Activated T-helper 2 cell treated with anti-CD3 and anti-CD28 coated beads, Interferon-gamma antibody, Interleukin-2, Interleukin-4, amounts not matched to agents 10 μg/mL and 5 μg/mL and 100 μg/mL, durations not matched to agents 14 hours and 24 hours and 36 hours (primary cell): ENCODE measurements at regions of chr16 and their contacts with region 1.

Region 1: DNA sequence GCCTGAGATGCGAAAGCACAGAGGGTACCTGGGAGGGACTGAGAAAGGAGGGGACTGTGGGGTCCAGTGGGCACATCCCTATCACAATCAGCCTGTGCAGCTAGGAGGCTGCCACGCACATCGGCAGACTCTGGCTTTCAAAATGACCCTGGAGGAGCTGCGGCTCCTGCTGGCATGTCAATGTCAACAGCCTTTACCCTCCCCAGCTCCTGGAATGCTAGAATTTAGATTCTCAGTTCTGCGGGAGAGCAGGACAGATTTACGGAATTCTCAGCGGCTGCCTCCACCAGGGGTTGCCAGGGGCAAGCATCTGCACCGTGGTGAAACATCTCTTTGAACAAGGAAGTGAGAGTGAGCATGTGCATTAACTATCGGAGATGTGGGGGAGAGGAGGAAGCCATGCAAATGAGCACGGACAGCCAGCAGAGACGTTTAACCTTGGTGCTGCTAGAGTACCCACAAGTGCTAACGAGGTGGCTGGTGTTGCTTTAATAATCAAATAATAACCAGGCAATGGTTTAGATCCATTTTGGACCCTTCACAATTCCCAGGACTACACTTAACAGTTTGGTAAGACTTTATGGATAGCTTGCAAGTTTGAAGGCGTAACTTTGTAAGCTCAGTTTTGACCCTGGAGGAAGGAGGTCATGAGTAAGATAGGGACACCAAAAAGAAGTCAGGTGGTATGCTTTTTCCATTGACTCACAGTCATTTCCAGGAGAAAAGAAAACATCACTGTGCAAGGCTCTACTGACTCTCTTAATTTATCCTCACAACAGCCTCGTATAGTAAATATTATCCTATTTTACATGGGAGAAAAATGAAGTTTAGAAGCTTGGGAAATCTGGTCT is 54.1 kb downstream of the XYLT1 start:
- DNase-seq: peak; percentile 49
- H3K4me3 Mint-ChIP-seq: peak overlapping the region; percentile 66
- H3K27ac Mint-ChIP-seq: peak overlapping the region; percentile 97
- H3K4me1 Mint-ChIP-seq: peaks cover 41% of the 10 kb centered on the region
- H3K27me3 Mint-ChIP-seq: no peaks in the 10 kb centered on the region

Region 2: DNA sequence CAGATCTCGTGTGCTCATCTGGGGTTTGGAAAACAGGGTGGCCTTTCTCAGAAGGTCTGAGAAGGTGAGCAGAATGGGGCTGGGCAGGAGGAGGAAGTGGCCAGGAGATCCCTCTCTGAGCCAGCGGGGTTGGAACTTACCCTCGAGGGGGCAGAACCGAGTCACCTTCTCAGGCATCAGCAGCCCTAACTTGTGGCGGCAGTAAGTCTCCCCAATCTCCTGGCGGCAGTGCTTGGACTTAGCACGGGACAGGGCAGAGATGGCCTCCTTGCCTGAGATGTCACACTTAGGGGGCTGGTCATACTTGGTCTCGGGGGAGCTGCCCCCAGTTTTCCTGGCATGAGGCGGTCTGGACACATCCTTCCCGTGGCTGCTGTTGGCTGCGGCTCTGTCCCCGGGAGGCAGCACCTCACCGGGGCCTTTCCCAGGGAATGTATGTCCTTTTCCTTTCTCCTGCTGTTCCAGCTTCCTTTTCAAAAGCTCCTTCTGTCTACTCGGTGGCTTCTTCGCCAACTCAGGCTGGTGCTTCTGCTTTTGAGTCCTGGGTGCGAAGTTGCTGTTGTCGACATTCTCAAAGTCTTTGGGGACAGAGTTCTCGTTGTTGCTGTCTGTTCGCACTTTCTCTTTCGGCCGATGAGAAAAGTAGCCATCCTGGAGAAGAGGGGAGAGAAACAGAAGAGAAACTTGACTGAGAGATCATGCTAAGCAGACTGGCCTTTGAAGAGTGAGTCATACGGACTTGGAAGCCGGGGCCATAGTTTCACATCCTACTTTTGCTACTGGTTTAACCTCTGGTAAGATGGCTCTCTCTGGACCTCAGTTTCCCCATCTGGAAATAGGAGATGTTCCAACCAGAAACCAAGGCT is 157.6 kb before region 1 on chr16:
- intact Hi-C with region 1: no loop called
- DNase-seq: no peak
- H3K4me3 Mint-ChIP-seq: no peak overlapping the region
- H3K27ac Mint-ChIP-seq: no peak overlapping the region
- H3K4me1 Mint-ChIP-seq: peaks cover 26% of the 10 kb centered on the region
- H3K27me3 Mint-ChIP-seq: no peaks in the 10 kb centered on the region

Region 3: GRCh38 chr16:17273142-17273561 is 143.5 kb before region 1 on chr16:
- intact Hi-C with region 1: loop called (anchors 2 kb)
- DNase-seq: peak; percentile 31
- H3K4me3 Mint-ChIP-seq: no peak overlapping the region
- H3K27ac Mint-ChIP-seq: no peak overlapping the region
- H3K4me1 Mint-ChIP-seq: peaks cover 58% of the 10 kb centered on the region
- H3K27me3 Mint-ChIP-seq: peaks cover 7% of the 10 kb centered on the region

Region 4: DNA sequence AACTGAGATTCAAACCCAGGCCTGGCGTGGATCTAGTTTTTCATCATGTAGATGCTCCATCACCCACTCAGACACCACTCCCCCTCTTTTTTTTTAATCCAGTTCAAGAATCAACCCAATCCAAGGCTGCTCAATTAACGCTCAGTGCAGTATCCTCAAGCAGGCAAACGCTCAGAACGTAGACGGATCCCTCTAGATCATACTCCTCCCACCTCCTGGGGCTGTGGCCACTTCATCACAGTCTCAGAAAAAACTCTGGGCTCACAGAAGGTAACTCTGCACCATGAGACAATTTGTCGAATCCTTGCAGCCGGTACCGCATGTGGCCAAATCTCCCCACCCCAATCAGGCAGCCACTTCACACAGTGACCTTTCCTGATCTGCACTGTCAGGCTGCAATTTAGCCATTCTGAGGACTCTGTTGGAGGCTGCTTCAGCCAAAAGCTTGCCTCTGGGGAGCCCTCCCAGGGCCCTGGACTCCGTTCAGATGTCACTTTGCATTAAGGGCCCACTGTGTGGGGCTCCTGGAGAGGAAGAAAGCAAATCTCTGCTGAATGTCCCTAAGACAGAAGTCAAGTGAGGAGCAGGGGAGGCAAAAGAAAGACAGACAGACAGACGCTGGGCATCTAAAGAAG is 129.4 kb before region 1 on chr16:
- intact Hi-C with region 1: no loop called
- DNase-seq: no peak
- H3K4me3 Mint-ChIP-seq: no peak overlapping the region
- H3K27ac Mint-ChIP-seq: no peak overlapping the region
- H3K4me1 Mint-ChIP-seq: peaks cover 11% of the 10 kb centered on the region
- H3K27me3 Mint-ChIP-seq: no peaks in the 10 kb centered on the region

Region 5: GRCh38 chr16:17369421-17370222 is 47.1 kb before region 1 on chr16:
- intact Hi-C with region 1: loop called (anchors 1 kb)
- DNase-seq: peak; percentile 76
- H3K4me3 Mint-ChIP-seq: peak overlapping the region; percentile 83
- H3K27ac Mint-ChIP-seq: peak overlapping the region; percentile 99
- H3K4me1 Mint-ChIP-seq: peaks cover 83% of the 10 kb centered on the region
- H3K27me3 Mint-ChIP-seq: no peaks in the 10 kb centered on the region

Region 6: DNA sequence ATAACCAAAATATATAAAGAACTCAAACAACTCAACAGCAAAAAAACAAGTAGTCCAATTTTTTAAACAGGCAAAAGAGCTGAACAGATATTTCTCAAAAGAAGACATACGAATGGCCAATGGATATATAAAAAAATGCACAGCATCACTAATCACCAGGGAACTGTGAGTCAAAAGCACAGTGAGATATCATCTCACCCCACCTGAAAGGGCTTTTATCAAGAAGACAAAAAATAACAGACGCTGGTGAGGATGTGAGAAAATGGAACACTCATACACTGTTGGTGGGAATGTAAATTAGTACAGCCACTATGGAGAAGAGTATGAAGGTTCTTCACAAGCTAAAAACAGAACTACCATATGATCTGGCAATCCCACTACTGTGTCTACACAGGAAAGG is 46.6 kb after region 1 on chr16:
- intact Hi-C with region 1: loop called (anchors 1 kb)
- DNase-seq: no peak
- H3K4me3 Mint-ChIP-seq: no peak overlapping the region
- H3K27ac Mint-ChIP-seq: peak overlapping the region; percentile 29
- H3K4me1 Mint-ChIP-seq: peaks cover 54% of the 10 kb centered on the region
- H3K27me3 Mint-ChIP-seq: no peaks in the 10 kb centered on the region